Activated T-helper 2 cell treated with anti-CD3 and anti-CD28 coated beads, Interferon-gamma antibody, Interleukin-2, Interleukin-4, amounts not matched to agents 10 μg/mL and 5 μg/mL and 100 μg/mL, durations not matched to agents 14 hours and 24 hours and 36 hours (primary cell): ENCODE measurements at regions of chr7 and their contacts with region 1.

Region 1: GRCh38 chr7:100081535-100082102 is at the start of gene ZNF3:
- DNase-seq: peak; percentile 98
- H3K4me3 Mint-ChIP-seq: peak within 1 kb of the TSS; percentile 89
- H3K27ac Mint-ChIP-seq: peak within 1 kb of the TSS; percentile 88
- H3K4me1 Mint-ChIP-seq: peaks cover 23% of the 10 kb centered on the region
- H3K27me3 Mint-ChIP-seq: peaks cover 2% of the 10 kb centered on the region
- total RNA-seq, gene ZNF3: 23.6 and 25.5 TPM in 2 replicates

Region 2: GRCh38 chr7:99594948-99595745 is 486.5 kb before region 1 on chr7:
- intact Hi-C with region 1: no loop called
- DNase-seq: no peak
- H3K4me3 Mint-ChIP-seq: no peak overlapping the region
- H3K27ac Mint-ChIP-seq: no peak overlapping the region
- H3K4me1 Mint-ChIP-seq: no peaks in the 10 kb centered on the region
- H3K27me3 Mint-ChIP-seq: no peaks in the 10 kb centered on the region

Region 3: GRCh38 chr7:99624484-99624883 is 457.1 kb before region 1 on chr7:
- intact Hi-C with region 1: loop called (anchors 10 kb)
- DNase-seq: peak; percentile 72
- H3K4me3 Mint-ChIP-seq: peak overlapping the region; percentile 91
- H3K27ac Mint-ChIP-seq: peak overlapping the region; percentile 97
- H3K4me1 Mint-ChIP-seq: peaks cover 64% of the 10 kb centered on the region
- H3K27me3 Mint-ChIP-seq: no peaks in the 10 kb centered on the region

Region 4: GRCh38 chr7:99918959-99919813 is 162.4 kb before region 1 on chr7 and contains the start of gene TRIM4:
- intact Hi-C with region 1: loop called (anchors 2 kb)
- DNase-seq: peak; percentile 90
- H3K4me3 Mint-ChIP-seq: peak within 1 kb of the TSS; percentile 96
- H3K27ac Mint-ChIP-seq: peak within 1 kb of the TSS; percentile 94
- H3K4me1 Mint-ChIP-seq: peaks cover 29% of the 10 kb centered on the region
- H3K27me3 Mint-ChIP-seq: no peaks in the 10 kb centered on the region
- total RNA-seq, gene TRIM4: 21.8 and 23.2 TPM in 2 replicates

Region 5: GRCh38 chr7:99949638-99950228 is 131.9 kb before region 1 on chr7:
- intact Hi-C with region 1: no loop called
- DNase-seq: no peak
- H3K4me3 Mint-ChIP-seq: no peak overlapping the region
- H3K27ac Mint-ChIP-seq: no peak overlapping the region
- H3K4me1 Mint-ChIP-seq: peaks cover 4% of the 10 kb centered on the region
- H3K27me3 Mint-ChIP-seq: peaks cover 2% of the 10 kb centered on the region

Region 6: GRCh38 chr7:99990460-99990852 is 91.2 kb before region 1 on chr7:
- intact Hi-C with region 1: loop called (anchors 5 kb)
- DNase-seq: no peak
- H3K4me3 Mint-ChIP-seq: no peak overlapping the region
- H3K27ac Mint-ChIP-seq: no peak overlapping the region
- H3K4me1 Mint-ChIP-seq: peaks cover 4% of the 10 kb centered on the region
- H3K27me3 Mint-ChIP-seq: peaks cover 9% of the 10 kb centered on the region

Region 7: GRCh38 chr7:100034871-100035510 is 46.6 kb before region 1 on chr7:
- intact Hi-C with region 1: no loop called
- DNase-seq: no peak
- H3K4me3 Mint-ChIP-seq: no peak overlapping the region
- H3K27ac Mint-ChIP-seq: no peak overlapping the region
- H3K4me1 Mint-ChIP-seq: peaks cover under 1% of the 10 kb centered on the region
- H3K27me3 Mint-ChIP-seq: no peaks in the 10 kb centered on the region

Region 8: DNA sequence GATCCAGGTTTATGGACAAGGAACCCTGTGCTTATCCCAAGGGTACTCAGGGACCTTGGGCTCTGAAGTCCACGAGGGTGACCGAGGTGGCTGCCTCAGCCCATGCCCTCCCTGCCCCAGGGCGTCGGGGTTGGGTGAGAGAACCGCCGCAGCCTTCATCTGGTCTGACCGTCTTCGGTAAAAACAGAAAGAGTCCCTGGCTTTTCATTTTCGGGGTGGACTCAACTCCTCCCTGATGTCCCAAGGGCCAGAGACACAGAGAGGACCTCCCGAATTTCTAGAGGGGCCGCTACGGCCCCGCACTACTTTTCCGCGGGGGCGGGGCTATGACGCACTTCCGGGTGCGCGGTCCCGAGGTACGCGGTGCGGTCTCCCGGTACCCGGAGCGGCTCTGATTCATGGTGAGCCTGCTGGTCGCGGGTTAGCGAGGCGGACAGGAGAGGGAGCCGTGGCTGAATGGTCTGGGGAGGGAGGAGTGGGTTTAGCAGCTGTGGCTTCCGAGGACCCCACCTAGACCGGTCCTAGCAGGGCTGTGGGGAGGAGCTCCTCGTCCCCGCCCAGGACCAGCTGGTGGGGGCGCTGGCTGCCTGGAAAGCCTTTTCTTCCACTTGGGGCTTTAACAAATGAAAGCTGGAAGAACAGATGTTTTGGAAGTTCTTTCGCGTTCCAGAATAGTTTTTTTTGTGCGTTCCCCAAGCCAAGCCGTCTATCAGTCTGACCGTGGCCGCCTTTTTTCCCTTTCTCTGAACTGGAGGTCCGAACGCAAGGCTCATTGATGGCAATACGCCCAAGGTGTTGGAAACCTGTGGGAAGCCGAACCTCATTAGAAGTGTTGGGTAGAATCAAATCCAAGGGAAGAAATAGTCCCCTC is 31.9 kb before region 1 on chr7 and contains the start of gene ZSCAN21:
- intact Hi-C with region 1: loop called (anchors 2 kb)
- DNase-seq: peak; percentile 74
- H3K4me3 Mint-ChIP-seq: peak within 1 kb of the TSS; percentile 84
- H3K27ac Mint-ChIP-seq: peak within 1 kb of the TSS; percentile 89
- H3K4me1 Mint-ChIP-seq: peaks cover 8% of the 10 kb centered on the region
- H3K27me3 Mint-ChIP-seq: no peaks in the 10 kb centered on the region
- total RNA-seq, gene ZSCAN21: 6.1 and 7.7 TPM in 2 replicates

Region 9: GRCh38 chr7:100101016-100101862 is 19.6 kb after region 1 on chr7 and contains the starts of genes AP4M1 and MCM7:
- intact Hi-C with region 1: loop called (anchors 2 kb)
- DNase-seq: peak; percentile 98
- H3K4me3 Mint-ChIP-seq: peak within 1 kb of the TSS; percentile 93
- H3K27ac Mint-ChIP-seq: peak within 1 kb of the TSS; percentile 93
- H3K4me1 Mint-ChIP-seq: peaks cover 37% of the 10 kb centered on the region
- H3K27me3 Mint-ChIP-seq: no peaks in the 10 kb centered on the region
- total RNA-seq, gene AP4M1: 12.2 and 16.4 TPM in 2 replicates
- total RNA-seq, gene MCM7: 383 and 389 TPM in 2 replicates

Region 10: GRCh38 chr7:100119062-100119700 is 37.6 kb after region 1 on chr7 and contains the starts of genes CNPY4 and TAF6:
- intact Hi-C with region 1: loop called (anchors 1 kb)
- DNase-seq: peak; percentile 91
- H3K4me3 Mint-ChIP-seq: peak within 1 kb of the TSS; percentile 97
- H3K27ac Mint-ChIP-seq: peak within 1 kb of the TSS; percentile 90
- H3K4me1 Mint-ChIP-seq: peaks cover 12% of the 10 kb centered on the region
- H3K27me3 Mint-ChIP-seq: no peaks in the 10 kb centered on the region
- total RNA-seq, gene CNPY4: 17.0 and 19.1 TPM in 2 replicates
- total RNA-seq, gene TAF6: 68.1 and 76.9 TPM in 2 replicates